ENCODE measurements at regions of chr12 and their contacts with region 1.

Region 1: DNA sequence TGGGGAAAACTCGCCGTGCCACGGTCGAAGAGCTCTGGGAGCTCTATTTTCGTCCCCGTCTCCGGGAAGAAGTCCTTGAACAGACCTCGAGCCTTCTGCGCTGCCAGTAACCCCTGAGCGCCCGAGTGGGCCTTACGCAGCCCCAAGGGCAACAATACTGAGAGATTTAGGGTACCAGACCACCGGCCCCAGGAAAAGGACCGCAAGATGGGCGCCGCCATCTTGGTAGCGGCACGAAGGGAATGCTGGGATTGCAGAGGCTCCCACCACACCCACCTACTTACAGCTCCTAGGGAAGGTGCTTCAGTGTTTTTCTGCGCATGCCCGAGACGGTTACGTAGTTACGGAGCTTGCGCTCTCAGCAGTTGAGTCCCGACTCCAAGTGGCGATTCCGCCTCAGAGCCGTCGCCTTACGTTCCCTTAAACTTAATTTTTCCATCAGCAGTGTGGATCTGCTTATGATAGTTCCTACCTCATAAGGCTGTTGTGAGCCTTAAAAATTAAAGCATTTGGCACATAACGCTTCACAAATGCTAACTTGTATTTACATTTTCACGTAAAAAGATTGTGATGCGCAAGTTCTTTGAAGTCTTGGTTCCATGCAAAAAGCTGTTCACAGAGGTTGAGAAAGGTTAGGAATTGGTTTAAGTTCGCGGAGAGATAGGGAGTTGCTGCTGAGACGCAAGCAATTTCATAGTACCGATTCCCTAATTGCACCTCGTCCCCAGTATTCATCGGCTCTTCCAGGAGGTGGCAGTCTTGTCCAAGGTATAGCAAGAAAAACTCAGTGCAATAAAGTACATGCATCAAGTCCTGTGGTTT is at the start of gene YARS2:
- DNase-seq: peak; percentile 93
- H3K4me3 ChIP-seq: peak within 1 kb of the TSS; percentile 68 to 82 (median 76)
- H3K27ac ChIP-seq: peak within 1 kb of the TSS; percentile 96
- H3K4me1 ChIP-seq: peaks cover 23% of the 10 kb centered on the region
- H3K27me3 ChIP-seq: no peaks in the 10 kb centered on the region
- CTCF ChIP-seq: peak; percentile 71 to 81
- total RNA-seq, gene YARS2: 31.5 to 37.5 TPM

Region 2: DNA sequence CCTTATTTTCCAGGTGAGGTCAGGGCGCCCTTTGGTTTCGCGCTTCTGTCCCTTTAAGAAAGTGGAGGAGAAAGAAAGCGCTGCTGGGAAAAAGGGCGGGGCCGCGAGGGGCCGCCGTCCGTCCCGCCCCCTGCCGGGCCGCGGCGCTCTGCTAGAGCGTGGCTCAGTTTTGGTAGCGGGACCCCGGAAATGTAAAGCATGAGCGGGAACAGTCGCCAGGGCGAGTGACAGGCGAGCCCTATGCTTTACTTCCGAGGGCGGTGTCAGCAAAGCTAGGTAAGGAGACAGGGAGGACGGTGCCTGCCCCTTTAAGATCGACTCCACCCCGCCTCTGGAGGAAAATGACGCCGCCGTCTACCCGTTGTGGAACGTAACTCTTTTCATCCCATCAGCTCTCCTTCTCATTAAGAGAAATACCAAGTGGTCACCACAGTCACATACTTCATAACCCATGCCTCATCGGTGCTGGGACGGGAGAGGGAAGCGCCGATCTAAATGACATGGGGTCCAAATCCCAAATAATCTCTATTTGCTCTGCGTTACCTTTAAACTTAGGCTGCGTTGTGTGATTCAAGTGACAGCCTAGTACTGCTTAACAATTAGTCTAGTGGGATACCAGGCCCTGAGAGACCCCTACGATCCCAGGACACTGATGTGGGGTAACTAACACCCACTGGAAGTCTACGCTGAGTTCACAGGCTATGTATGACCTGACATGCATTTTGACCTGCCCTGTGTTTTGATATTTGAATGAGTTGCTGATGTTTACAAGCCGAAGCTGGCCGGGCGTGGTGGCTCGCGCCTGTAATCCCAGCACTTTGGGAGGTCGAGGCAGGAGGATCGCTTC is 1096.6 kb before region 1 on chr12 and contains the start of gene ETFBKMT:
- CTCF ChIA-PET with region 1: no interaction called
- dilution Hi-C with region 1: no loop called
- in situ Hi-C with region 1: no loop called
- intact Hi-C with region 1: loop called (anchors 10 kb)
- DNase-seq: peak; percentile 96
- H3K4me3 ChIP-seq: peak within 1 kb of the TSS; percentile 68 to 81 (median 75)
- H3K27ac ChIP-seq: peak within 1 kb of the TSS; percentile 92
- H3K4me1 ChIP-seq: peaks cover 7% of the 10 kb centered on the region
- H3K27me3 ChIP-seq: no peaks in the 10 kb centered on the region
- CTCF ChIP-seq: peak in 1 of 2 donors; percentile 45
- total RNA-seq, gene ETFBKMT: 2.1 to 2.5 TPM

Region 3: GRCh38 chr12:32455607-32456071 is 300.2 kb before region 1 on chr12:
- CTCF ChIA-PET with region 1: no interaction called
- dilution Hi-C with region 1: no loop called
- in situ Hi-C with region 1: no loop called
- intact Hi-C with region 1: loop called (anchors 1 kb)
- DNase-seq: peak; percentile 58
- H3K4me3 ChIP-seq: peak overlapping the region; percentile 25 to 56 (median 50)
- H3K27ac ChIP-seq: peak overlapping the region; percentile 94
- H3K4me1 ChIP-seq: peaks cover 52% of the 10 kb centered on the region
- H3K27me3 ChIP-seq: no peaks in the 10 kb centered on the region
- CTCF ChIP-seq: peak; percentile 63 to 65

Region 4: DNA sequence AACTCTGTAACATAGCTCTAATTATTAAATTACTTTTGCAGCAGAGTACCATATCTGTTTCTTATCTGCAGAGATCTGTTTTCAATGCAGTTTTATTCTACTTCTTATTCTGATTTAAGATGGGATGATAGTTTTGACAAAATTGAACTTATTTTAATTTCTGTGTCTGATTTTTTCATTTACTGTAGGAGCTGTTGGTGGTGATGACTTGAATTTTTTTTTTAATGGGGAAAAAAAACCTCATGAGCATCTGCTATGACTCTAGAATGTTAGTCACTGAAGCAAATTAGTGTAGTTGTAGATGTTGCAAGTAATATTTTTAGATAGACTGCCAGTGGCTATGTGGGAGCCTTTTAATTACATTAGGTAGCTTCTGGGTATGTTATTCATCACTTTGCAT is 53.4 kb before region 1 on chr12:
- CTCF ChIA-PET with region 1: no interaction called
- dilution Hi-C with region 1: no loop called
- in situ Hi-C with region 1: no loop called
- intact Hi-C with region 1: no loop called
- DNase-seq: peak; percentile 14
- H3K4me3 ChIP-seq: no peak overlapping the region
- H3K27ac ChIP-seq: no peak overlapping the region
- H3K4me1 ChIP-seq: no peaks in the 10 kb centered on the region
- H3K27me3 ChIP-seq: no peaks in the 10 kb centered on the region
- CTCF ChIP-seq: no peak

Region 5: DNA sequence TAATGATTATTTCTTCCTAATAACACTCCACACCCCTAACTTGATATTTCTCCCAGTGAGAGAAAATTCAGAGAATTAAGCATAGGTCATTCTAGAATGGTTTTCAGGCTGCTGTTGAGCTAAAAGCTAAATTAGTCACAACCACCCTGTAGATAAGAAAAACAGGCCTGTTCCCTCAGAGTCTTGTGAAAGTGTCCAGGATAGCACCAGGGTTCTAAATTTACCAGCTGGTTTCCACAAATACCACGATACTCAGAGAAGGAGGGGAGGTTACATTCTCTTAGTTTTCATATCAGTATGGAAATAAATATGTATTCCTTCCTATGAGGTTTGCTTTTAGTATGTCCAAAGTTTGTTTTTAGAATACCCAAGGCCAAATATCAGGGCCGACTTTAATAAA is 65.8 kb after region 1 on chr12:
- CTCF ChIA-PET with region 1: no interaction called
- dilution Hi-C with region 1: no loop called
- in situ Hi-C with region 1: no loop called
- intact Hi-C with region 1: loop called (anchors 5 kb)
- DNase-seq: no peak
- H3K4me3 ChIP-seq: no peak overlapping the region
- H3K27ac ChIP-seq: peak overlapping the region; percentile 71
- H3K4me1 ChIP-seq: peaks cover 10% of the 10 kb centered on the region
- H3K27me3 ChIP-seq: no peaks in the 10 kb centered on the region
- CTCF ChIP-seq: no peak

Region 6: GRCh38 chr12:32836710-32837109 is 80.8 kb after region 1 on chr12:
- CTCF ChIA-PET with region 1: no interaction called
- dilution Hi-C with region 1: no loop called
- in situ Hi-C with region 1: no loop called
- intact Hi-C with region 1: no loop called
- DNase-seq: peak; percentile 18
- H3K4me3 ChIP-seq: no peak overlapping the region
- H3K27ac ChIP-seq: no peak overlapping the region
- H3K4me1 ChIP-seq: peaks cover 5% of the 10 kb centered on the region
- H3K27me3 ChIP-seq: no peaks in the 10 kb centered on the region
- CTCF ChIP-seq: no peak

Region 7: DNA sequence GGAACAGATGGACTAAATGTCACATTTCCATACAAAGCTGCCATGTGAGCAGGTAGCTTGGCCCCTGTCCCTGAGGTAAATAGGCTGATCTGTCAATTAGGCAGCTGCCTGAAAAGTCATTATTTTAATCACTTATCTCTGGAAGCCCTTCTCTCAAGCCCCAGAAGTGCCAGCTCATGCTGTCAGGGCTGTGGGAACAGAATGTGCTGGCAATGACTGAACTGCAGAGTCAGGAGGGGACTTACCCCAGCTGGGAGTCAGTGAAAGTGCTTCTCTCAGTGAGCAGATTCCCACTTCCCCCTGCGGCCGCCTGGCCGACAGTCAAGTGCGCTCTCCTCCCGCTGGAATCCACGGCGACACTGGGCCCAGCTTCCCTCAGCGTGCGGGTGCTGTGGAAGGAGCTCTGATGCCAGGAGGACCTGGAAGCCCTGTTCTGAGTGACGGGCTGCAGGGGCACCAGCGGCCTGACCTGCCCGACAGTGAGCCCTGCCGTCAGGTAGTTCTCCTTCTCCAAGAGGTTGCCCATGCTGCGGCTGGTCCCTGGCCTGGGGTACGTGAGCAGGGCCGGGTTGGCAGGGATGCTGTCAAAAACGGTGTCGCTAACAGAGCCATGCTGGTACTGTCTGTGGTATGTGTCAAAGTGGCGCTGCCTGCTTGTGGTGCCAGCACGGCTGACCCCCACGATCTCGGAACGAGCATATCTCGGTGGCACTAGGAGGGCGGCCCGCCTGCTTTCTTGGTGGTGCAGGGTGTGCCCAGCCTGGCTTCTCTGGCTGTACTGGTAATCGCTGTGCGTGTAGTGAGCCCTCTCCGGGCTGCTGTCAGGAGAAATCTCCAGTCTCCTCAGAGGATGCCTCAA is 122.0 kb after region 1 on chr12:
- CTCF ChIA-PET with region 1: no interaction called
- dilution Hi-C with region 1: no loop called
- in situ Hi-C with region 1: no loop called
- intact Hi-C with region 1: no loop called
- DNase-seq: no peak
- H3K4me3 ChIP-seq: no peak overlapping the region
- H3K27ac ChIP-seq: no peak overlapping the region
- H3K4me1 ChIP-seq: no peaks in the 10 kb centered on the region
- H3K27me3 ChIP-seq: no peaks in the 10 kb centered on the region
- CTCF ChIP-seq: no peak

Region 8: DNA sequence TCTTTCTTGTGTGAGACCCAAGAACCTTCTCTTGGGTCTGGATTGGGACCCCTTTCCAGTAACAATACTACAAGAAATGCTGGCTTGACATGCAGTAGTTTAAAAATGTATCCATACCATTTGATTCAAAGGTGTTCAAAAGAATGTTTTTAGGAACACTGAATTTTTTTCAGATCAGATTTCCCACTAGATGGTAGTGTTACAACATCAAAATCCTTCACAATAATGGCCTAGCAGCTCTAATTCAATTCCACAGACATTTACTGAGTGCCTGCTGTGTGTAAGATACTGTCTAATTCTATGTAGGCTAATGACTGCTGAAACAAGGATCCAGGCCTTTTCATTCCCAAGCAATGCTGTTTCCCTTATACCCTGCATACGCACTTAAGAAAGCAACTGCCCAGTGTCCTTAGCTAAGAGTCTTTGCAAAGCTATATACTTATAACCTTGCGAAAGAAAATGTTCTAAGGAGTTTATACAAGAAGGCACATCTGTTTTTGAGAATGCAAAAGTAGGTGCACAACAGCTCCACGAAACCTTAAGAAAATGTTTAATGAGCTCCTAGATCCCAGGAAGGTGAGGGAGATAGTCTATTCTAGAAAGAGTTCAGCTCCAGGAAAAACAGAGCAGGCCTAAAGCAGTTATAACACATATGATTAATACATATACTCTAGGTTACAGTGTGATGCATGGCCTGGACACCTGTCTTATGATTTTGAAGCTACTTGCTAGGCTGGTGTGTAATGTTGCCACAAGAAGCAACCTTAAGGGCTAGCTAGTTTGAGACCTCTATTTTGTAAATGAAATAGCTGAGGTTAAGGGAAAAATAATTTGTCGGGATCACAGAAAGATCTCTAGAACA is 191.6 kb after region 1 on chr12:
- CTCF ChIA-PET with region 1: interaction called, 3 read pairs
- dilution Hi-C with region 1: no loop called
- in situ Hi-C with region 1: no loop called
- intact Hi-C with region 1: loop called (anchors 1 kb)
- DNase-seq: peak; percentile 34
- H3K4me3 ChIP-seq: no peak overlapping the region
- H3K27ac ChIP-seq: no peak overlapping the region
- H3K4me1 ChIP-seq: peaks cover 11% of the 10 kb centered on the region
- H3K27me3 ChIP-seq: no peaks in the 10 kb centered on the region
- CTCF ChIP-seq: peak; percentile 10 to 36

Region 9: DNA sequence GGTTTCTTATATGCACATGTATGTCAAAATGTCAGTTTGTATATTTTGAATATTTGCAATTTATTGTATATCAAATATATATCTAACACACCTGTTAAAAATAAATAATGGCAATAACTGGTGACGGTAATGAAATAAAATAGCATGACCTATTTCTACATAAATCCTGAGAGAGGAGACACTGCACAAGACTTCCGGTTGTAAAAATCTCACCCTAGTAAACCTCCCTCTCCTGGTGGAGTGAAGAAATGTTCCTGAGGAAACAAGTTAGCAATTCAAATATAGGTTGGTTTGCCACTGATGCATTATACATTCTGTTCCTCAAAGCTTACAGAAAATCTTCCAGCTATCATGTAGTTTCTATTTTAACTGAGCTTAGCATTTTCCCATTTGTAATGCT is 849.9 kb after region 1 on chr12:
- CTCF ChIA-PET with region 1: interaction called, 7 read pairs
- dilution Hi-C with region 1: no loop called
- in situ Hi-C with region 1: no loop called
- intact Hi-C with region 1: loop called (anchors 1 kb)
- DNase-seq: peak; percentile 30
- H3K4me3 ChIP-seq: no peak overlapping the region
- H3K27ac ChIP-seq: no peak overlapping the region
- H3K4me1 ChIP-seq: no peaks in the 10 kb centered on the region
- H3K27me3 ChIP-seq: no peaks in the 10 kb centered on the region
- CTCF ChIP-seq: peak; percentile 51 to 71

Region 10: DNA sequence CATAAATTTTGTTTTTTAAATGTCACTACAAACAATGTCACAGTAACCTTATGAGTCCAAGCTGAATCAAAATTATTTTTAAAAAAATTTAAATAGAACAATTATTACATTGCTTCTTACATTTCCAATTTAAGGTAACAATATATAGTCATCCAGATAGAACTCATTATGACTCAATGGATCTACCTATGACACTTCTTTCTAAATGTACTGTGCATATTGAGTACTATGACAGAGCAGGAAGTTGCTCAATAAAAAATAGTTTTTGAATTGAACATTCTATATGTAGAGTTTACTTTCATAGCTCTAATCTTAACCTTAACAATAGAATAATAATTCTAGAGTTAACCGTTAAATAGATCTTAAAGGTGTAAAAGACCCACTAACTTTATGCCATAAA is 1222.0 kb after region 1 on chr12:
- CTCF ChIA-PET with region 1: interaction called, 4 read pairs
- dilution Hi-C with region 1: no loop called
- in situ Hi-C with region 1: no loop called
- intact Hi-C with region 1: loop called (anchors 10 kb)
- DNase-seq: peak; percentile 48
- H3K4me3 ChIP-seq: no peak overlapping the region
- H3K27ac ChIP-seq: no peak overlapping the region
- H3K4me1 ChIP-seq: no peaks in the 10 kb centered on the region
- H3K27me3 ChIP-seq: no peaks in the 10 kb centered on the region
- CTCF ChIP-seq: no peak

Measured in mammary epithelial cell (primary cell).